ENCODE measurements at regions of chr15 and their contacts with region 1.

Region 1: GRCh38 chr15:90143166-90143655 is 40.9 kb upstream of the IDH2 start:
- DNase-seq: peak; percentile 69
- H3K4me3 Mint-ChIP-seq: no peak overlapping the region
- H3K27ac Mint-ChIP-seq: no peak overlapping the region
- H3K4me1 Mint-ChIP-seq: no peaks in the 10 kb centered on the region
- H3K27me3 Mint-ChIP-seq: no peaks in the 10 kb centered on the region
- CTCF ChIP-seq: peak; percentile 85

Region 2: GRCh38 chr15:89888214-89888804 is 254.9 kb before region 1 on chr15:
- CTCF ChIA-PET with region 1: no interaction called
- POLR2A ChIA-PET with region 1: no interaction called
- intact Hi-C with region 1: no loop called
- DNase-seq: peak; percentile 70
- H3K4me3 Mint-ChIP-seq: no peak overlapping the region
- H3K27ac Mint-ChIP-seq: no peak overlapping the region
- H3K4me1 Mint-ChIP-seq: no peaks in the 10 kb centered on the region
- H3K27me3 Mint-ChIP-seq: no peaks in the 10 kb centered on the region
- CTCF ChIP-seq: peak; percentile 51

Region 3: DNA sequence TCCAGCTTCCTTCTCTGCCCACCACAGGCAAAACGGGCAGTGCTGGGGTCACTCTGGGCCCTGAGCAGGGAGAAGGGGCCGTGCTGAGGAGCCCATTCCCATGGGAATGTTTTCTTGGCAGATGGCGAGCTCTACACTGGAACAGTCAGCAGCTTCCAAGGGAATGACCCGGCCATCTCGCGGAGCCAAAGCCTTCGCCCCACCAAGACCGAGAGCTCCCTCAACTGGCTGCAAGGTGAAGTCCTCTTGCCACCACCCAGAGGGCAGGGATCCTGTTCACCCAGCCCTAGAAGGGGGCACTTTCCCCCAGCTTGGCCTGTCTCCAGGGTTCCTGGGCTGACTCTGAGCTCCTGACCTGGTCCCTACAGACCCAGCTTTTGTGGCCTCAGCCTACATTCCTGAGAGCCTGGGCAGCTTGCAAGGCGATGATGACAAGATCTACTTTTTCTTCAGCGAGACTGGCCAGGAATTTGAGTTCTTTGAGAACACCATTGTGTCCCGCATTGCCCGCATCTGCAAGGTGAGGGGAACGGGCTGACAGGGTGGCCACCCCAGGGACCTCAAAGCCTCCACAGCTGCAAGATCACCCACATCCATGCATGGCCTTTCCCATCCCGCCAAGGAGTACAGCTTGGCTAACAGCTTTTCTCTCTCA is 78.2 kb after region 1 on chr15:
- CTCF ChIA-PET with region 1: interaction called, 32 read pairs
- POLR2A ChIA-PET with region 1: interaction called, 4 read pairs
- intact Hi-C with region 1: no loop called
- DNase-seq: peak; percentile 75
- H3K4me3 Mint-ChIP-seq: no peak overlapping the region
- H3K27ac Mint-ChIP-seq: no peak overlapping the region
- H3K4me1 Mint-ChIP-seq: no peaks in the 10 kb centered on the region
- H3K27me3 Mint-ChIP-seq: no peaks in the 10 kb centered on the region
- CTCF ChIP-seq: peak; percentile 90

Region 4: GRCh38 chr15:90286678-90287077 is 143.5 kb after region 1 on chr15:
- CTCF ChIA-PET with region 1: interaction called, 3 read pairs
- POLR2A ChIA-PET with region 1: no interaction called
- intact Hi-C with region 1: loop called (anchors 1 kb)
- DNase-seq: peak; percentile 65
- H3K4me3 Mint-ChIP-seq: no peak overlapping the region
- H3K27ac Mint-ChIP-seq: no peak overlapping the region
- H3K4me1 Mint-ChIP-seq: no peaks in the 10 kb centered on the region
- H3K27me3 Mint-ChIP-seq: no peaks in the 10 kb centered on the region
- CTCF ChIP-seq: peak; percentile 20